Ovary (tissue), 10 donors: ENCODE measurements at regions of chr2 and their contacts with region 1.

Region 1: GRCh38 chr2:62415019-62415431 is 91.0 kb downstream of the TMEM17 start:
- DNase-seq: no peak
- H3K4me3 ChIP-seq: no peak overlapping the region
- H3K27ac ChIP-seq: no peak overlapping the region
- H3K4me1 ChIP-seq: peaks cover 9% of the 10 kb centered on the region
- H3K27me3 ChIP-seq: no peaks in the 10 kb centered on the region
- CTCF ChIP-seq: no peak
- EP300 ChIP-seq: no peak
- POLR2A ChIP-seq: no peak

Region 2: GRCh38 chr2:61993444-61994024 is 421.5 kb before region 1 on chr2:
- intact Hi-C with region 1: loop called in 1 of 4 experiments (anchors 5 kb)
- DNase-seq: no peak
- H3K4me3 ChIP-seq: no peak overlapping the region
- H3K27ac ChIP-seq: no peak overlapping the region
- H3K4me1 ChIP-seq: peaks cover 2% of the 10 kb centered on the region
- H3K27me3 ChIP-seq: no peaks in the 10 kb centered on the region
- CTCF ChIP-seq: peak in 2 of 3 donors; percentile 33
- EP300 ChIP-seq: no peak
- POLR2A ChIP-seq: no peak

Region 3: GRCh38 chr2:62195421-62196277 is 219.4 kb before region 1 on chr2 and contains the start of gene B3GNT2:
- intact Hi-C with region 1: loop called in 1 of 4 experiments (anchors 5 kb)
- DNase-seq: peak; percentile 81 to 89 (median 87)
- H3K4me3 ChIP-seq: peak within 1 kb of the TSS; percentile 56
- H3K27ac ChIP-seq: peak within 1 kb of the TSS; percentile 74 to 76
- H3K4me1 ChIP-seq: peaks cover 5% of the 10 kb centered on the region
- H3K27me3 ChIP-seq: no peaks in the 10 kb centered on the region
- CTCF ChIP-seq: no peak
- EP300 ChIP-seq: no peak
- POLR2A ChIP-seq: peak; percentile 76
- total RNA-seq, gene B3GNT2: 6.7 to 20.6 (median 11.2) TPM

Region 4: GRCh38 chr2:62309465-62310091 is 105.4 kb before region 1 on chr2:
- intact Hi-C with region 1: no loop called
- DNase-seq: no peak
- H3K4me3 ChIP-seq: no peak overlapping the region
- H3K27ac ChIP-seq: no peak overlapping the region
- H3K4me1 ChIP-seq: peaks cover 9% of the 10 kb centered on the region
- H3K27me3 ChIP-seq: no peaks in the 10 kb centered on the region
- CTCF ChIP-seq: no peak
- EP300 ChIP-seq: no peak
- POLR2A ChIP-seq: no peak

Region 5: DNA sequence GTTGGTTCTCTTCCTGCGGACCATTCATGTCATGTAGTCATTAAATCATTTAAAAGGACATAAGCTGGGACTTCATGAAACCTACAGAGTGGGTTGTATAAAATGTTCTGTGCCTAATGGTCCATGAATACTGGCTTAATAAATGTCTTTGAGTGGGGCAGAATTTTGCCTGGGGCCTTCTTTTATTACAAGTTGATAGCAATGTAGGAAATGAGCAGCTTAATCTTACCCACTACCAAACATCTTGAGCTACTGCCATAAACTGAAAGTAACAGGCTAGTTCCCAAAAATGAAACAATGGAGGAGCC is 40.0 kb before region 1 on chr2:
- intact Hi-C with region 1: loop called in 1 of 4 experiments (anchors 1 kb)
- DNase-seq: no peak
- H3K4me3 ChIP-seq: no peak overlapping the region
- H3K27ac ChIP-seq: no peak overlapping the region
- H3K4me1 ChIP-seq: no peaks in the 10 kb centered on the region
- H3K27me3 ChIP-seq: no peaks in the 10 kb centered on the region
- CTCF ChIP-seq: no peak
- EP300 ChIP-seq: no peak
- POLR2A ChIP-seq: no peak